PC-9 (cell line): ENCODE measurements at regions of chr1 and their contacts with region 1.

Region 1: GRCh38 chr1:11012250-11013171 is at the start of gene TARDBP:
- DNase-seq: peak; percentile 57 to 85
- H3K4me3 ChIP-seq: peak within 1 kb of the TSS; percentile 93
- H3K27ac ChIP-seq: peak within 1 kb of the TSS; percentile 95
- H3K4me1 ChIP-seq: peaks cover 11% of the 10 kb centered on the region
- H3K27me3 ChIP-seq: no peaks in the 10 kb centered on the region
- CTCF ChIP-seq: no peak
- total RNA-seq, gene TARDBP: 142 and 177 TPM in 2 replicates

Region 2: DNA sequence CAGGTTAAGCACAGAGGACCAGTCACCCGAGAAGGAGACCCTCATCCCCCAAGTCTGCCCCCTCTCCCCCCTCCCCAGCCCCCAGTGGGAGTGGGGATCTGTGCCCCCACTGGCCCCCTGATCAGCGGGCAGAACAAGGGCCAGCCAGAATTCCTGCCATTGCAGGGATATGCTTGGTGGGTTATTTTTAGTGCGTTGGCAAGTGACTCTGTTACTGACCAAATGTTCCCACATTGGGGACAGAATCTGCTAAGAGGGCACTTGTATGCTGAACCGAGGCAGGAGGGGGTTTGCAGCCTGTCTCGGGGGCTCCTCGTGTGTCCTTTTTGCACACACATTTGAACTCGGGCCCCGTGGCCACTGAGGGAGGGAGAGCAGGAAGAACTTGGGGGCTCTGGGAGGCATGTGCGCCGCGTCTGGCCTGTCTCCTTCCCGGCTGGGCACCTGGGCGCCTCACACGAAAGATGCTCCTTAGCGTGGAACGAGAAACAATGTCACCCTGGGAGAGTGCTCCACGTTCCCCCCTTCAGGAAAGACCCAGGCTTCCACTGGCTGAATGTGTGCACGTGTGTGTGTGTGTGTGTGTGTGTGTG is 149.7 kb before region 1 on chr1:
- CTCF ChIA-PET with region 1: no interaction called
- POLR2A ChIA-PET with region 1: no interaction called
- intact Hi-C with region 1: no loop called
- DNase-seq: no peak
- H3K4me3 ChIP-seq: no peak overlapping the region
- H3K27ac ChIP-seq: no peak overlapping the region
- H3K4me1 ChIP-seq: no peaks in the 10 kb centered on the region
- H3K27me3 ChIP-seq: no peaks in the 10 kb centered on the region
- CTCF ChIP-seq: no peak

Region 3: GRCh38 chr1:10960411-10961299 is 51.9 kb before region 1 on chr1:
- CTCF ChIA-PET with region 1: no interaction called
- POLR2A ChIA-PET with region 1: interaction called, 4 read pairs
- intact Hi-C with region 1: loop called (anchors 5 kb)
- DNase-seq: peak in 1 of 2 experiments; percentile 74
- H3K4me3 ChIP-seq: no peak overlapping the region
- H3K27ac ChIP-seq: no peak overlapping the region
- H3K4me1 ChIP-seq: peaks cover 5% of the 10 kb centered on the region
- H3K27me3 ChIP-seq: no peaks in the 10 kb centered on the region
- CTCF ChIP-seq: peak; percentile 82

Region 4: GRCh38 chr1:10980094-10980577 is 32.4 kb before region 1 on chr1:
- CTCF ChIA-PET with region 1: interaction called, 8 read pairs
- POLR2A ChIA-PET with region 1: no interaction called
- intact Hi-C with region 1: loop called (anchors 2 kb)
- DNase-seq: peak; percentile 81 to 93
- H3K4me3 ChIP-seq: no peak overlapping the region
- H3K27ac ChIP-seq: no peak overlapping the region
- H3K4me1 ChIP-seq: no peaks in the 10 kb centered on the region; the same call in none of the 2 replicates
- H3K27me3 ChIP-seq: no peaks in the 10 kb centered on the region
- CTCF ChIP-seq: peak; percentile 58

Region 5: DNA sequence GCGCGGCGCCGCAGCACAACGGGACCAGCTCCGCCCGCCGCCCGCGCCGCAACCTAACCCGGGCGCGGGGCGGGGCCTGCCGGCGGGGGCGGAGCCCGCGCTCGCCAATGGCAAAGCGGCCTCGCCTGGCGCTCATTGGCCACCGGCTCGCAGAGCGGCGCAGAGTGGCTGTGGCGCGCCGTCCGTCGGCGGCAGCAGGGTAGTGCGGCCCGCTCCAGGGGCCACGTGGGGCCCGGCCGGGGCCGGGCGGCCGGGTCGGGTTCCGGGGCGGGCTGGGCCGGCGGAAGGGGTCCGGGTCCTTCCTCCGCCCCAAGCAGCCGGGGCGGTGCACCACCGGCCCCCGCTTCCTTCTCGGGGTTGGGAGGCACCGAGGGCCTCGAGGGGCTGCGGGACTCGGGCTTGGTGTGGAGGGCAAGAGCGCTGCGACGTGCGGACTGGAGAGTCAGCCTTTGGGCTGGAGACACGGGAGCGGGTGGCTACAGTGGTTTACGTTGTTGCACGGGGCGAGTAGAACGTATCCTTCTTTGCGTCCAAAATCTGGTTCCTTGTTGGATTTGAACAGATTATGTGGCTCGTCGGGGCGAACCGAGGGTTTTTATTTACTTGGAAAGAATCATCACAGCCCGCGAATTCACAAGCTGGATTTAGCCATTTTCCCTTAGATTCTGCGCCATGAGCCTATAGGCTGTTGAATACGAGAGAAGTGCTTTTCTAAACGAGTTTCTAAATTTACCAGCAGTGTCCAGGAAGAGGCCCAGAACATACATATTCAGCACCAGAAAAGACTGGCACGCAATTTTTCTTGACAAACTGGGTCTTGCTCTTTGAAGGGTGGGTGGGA is 47.7 kb after region 1 on chr1 and contains the start of gene SRM:
- CTCF ChIA-PET with region 1: no interaction called
- POLR2A ChIA-PET with region 1: no interaction called
- intact Hi-C with region 1: no loop called
- DNase-seq: peak; percentile 68 to 92
- H3K4me3 ChIP-seq: peak within 1 kb of the TSS; percentile 79
- H3K27ac ChIP-seq: peak within 1 kb of the TSS; percentile 32; the same call in 1 of the 2 replicates
- H3K4me1 ChIP-seq: no peaks in the 10 kb centered on the region
- H3K27me3 ChIP-seq: no peaks in the 10 kb centered on the region
- CTCF ChIP-seq: 0 out of 2 replicates have a peak, but pooled peaks have one; percentile 6
- total RNA-seq, gene SRM: 50.3 and 55.3 TPM in 2 replicates